OCI-LY7 (cell line): ENCODE measurements at regions of chr9 and their contacts with region 1.

Region 1: GRCh38 chr9:131995382-131995781 is 84.3 kb downstream of the MED27 start:
- DNase-seq: no peak
- H3K4me3 ChIP-seq: no peak overlapping the region
- H3K27ac ChIP-seq: no peak overlapping the region
- H3K4me1 ChIP-seq: no peaks in the 10 kb centered on the region
- CTCF ChIP-seq: no peak

Region 2: DNA sequence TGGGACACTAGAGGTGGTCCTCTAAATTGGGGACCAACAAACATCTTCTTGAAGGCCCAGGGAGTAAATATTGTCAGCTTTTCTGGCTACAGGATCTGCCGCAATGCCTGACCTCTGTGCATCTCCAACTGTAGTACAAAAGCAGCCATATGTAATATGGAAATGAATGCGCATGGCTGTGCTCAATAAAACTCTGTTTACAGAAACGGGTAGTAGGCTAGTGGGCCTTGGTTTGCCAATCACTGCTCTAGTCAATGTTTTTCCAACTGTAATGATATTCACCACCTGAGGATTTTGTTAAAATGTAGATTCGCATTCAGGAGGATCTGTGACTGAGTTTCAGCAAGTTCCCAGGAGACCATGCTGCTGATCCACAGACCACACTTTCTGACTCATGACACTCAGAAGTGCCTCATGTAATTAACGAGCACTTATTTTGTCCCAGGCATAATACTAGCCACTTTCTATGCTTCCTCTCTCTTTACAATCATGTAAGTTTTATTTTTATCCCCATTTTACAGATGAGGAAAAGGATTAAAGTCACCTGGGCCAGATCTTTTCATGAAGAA is 12.6 kb before region 1 on chr9:
- CTCF ChIA-PET with region 1: interaction called, 14 read pairs
- POLR2A ChIA-PET with region 1: no interaction called
- intact Hi-C with region 1: no loop called
- DNase-seq: no peak
- H3K4me3 ChIP-seq: no peak overlapping the region
- H3K27ac ChIP-seq: no peak overlapping the region
- H3K4me1 ChIP-seq: no peaks in the 10 kb centered on the region
- CTCF ChIP-seq: no peak

Region 3: DNA sequence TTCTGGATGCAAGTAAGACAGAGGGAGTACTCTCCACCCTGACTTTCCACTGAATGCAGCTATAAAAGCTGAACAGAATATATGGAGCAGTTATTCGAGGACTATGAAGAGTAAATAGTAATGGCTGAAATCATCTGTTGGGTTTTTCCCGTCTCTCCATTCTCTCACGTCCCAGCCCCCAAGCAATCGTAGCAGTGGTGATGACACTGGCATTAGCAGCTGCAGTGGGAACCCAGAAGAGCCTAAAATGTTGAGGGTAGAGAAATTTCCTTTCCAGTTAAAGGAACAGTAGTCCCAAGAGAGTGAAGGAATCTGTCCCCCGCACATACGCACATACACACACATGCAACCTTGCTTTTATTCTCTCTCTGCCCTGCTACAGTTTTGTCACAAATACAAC is 51.1 kb after region 1 on chr9:
- CTCF ChIA-PET with region 1: no interaction called
- POLR2A ChIA-PET with region 1: no interaction called
- intact Hi-C with region 1: no loop called
- DNase-seq: no peak
- H3K4me3 ChIP-seq: no peak overlapping the region
- H3K27ac ChIP-seq: no peak overlapping the region
- H3K4me1 ChIP-seq: no peaks in the 10 kb centered on the region
- CTCF ChIP-seq: no peak